ENCODE measurements at regions of chr16 and their contacts with region 1.

Region 1: GRCh38 chr16:30005341-30006094 is 5.3 kb downstream of the DOC2A start:
- DNase-seq: peak in 1 of 5 donors; percentile 46
- H3K4me3 ChIP-seq: no peak overlapping the region
- H3K27ac ChIP-seq: no peak overlapping the region
- H3K4me1 ChIP-seq: peaks cover 2% of the 10 kb centered on the region
- H3K27me3 ChIP-seq: no peaks in the 10 kb centered on the region
- CTCF ChIP-seq: peak; percentile 24 to 76 (median 65)
- EP300 ChIP-seq: no peak
- POLR2A ChIP-seq: no peak

Region 2: GRCh38 chr16:29805378-29806098 is 200.0 kb before region 1 on chr16:
- intact Hi-C with region 1: loop called in 3 of 4 experiments (anchors 5 to 10 kb)
- DNase-seq: peak; percentile 97 to 98 (median 98)
- H3K4me3 ChIP-seq: peak overlapping the region; percentile 68
- H3K27ac ChIP-seq: peak overlapping the region; percentile 99
- H3K4me1 ChIP-seq: peaks cover 14% of the 10 kb centered on the region
- H3K27me3 ChIP-seq: no peaks in the 10 kb centered on the region
- CTCF ChIP-seq: peak in 2 of 3 donors; percentile 30 to 47
- EP300 ChIP-seq: no peak
- POLR2A ChIP-seq: peak; percentile 94

Region 3: GRCh38 chr16:29815793-29816693 is 189.5 kb before region 1 on chr16 and contains the start of gene PAGR1:
- intact Hi-C with region 1: loop called in 1 of 4 experiments (anchors 5 kb)
- DNase-seq: peak; percentile 98 to 99 (median 99)
- H3K4me3 ChIP-seq: peak within 1 kb of the TSS; percentile 95
- H3K27ac ChIP-seq: peak within 1 kb of the TSS; percentile 89 to 98
- H3K4me1 ChIP-seq: peaks cover 24% of the 10 kb centered on the region
- H3K27me3 ChIP-seq: no peaks in the 10 kb centered on the region
- CTCF ChIP-seq: peak; percentile 86 to 93 (median 92)
- EP300 ChIP-seq: no peak
- POLR2A ChIP-seq: peak; percentile 78
- total RNA-seq, gene PAGR1: 41.3 to 83.6 (median 66.6) TPM

Region 4: DNA sequence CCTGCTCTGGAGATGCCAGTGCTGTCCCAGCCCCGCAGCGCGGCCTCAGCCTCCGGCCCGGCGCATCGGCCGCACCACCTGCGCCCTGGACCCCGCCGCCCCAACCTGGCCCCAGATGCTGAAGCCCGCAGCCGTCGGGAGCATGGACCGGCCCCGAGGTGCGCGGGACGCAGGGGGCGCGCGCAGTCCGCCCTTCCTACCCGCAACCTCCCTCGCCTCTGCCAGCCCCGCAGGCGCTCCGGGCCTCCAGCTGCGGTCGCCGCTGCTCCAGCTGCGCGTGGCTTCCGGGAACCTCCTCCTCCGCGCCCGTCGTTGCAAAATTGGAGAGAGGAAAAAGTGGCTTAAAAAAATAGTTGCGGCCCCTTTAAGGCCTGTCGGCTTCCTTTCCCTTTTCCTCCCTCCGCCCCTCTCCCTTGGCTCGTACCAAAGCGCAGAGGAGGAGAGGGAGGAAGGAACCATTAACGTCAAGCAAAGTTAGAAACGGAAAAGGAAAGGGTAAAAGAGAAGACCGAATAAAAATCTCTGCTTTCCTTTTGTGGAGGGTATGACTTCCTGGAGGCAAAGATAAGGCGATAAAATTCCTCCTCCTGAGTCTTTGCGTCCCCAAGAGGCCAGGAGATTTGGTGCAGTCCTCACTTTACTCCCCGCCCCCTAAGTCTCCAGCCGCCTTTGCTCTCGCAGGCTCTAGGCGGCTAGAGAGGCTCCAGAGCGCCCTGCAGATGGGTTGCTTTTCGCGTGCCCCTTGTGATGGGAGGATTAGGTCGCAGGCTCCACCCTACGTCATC is 142.4 kb before region 1 on chr16 and contains the start of gene CDIPT:
- intact Hi-C with region 1: loop called in 1 of 4 experiments (anchors 10 kb)
- DNase-seq: peak; percentile 90 to 93 (median 93)
- H3K4me3 ChIP-seq: peak within 1 kb of the TSS; percentile 77
- H3K27ac ChIP-seq: peak within 1 kb of the TSS; percentile 89 to 93
- H3K4me1 ChIP-seq: peaks cover 4% of the 10 kb centered on the region
- H3K27me3 ChIP-seq: no peaks in the 10 kb centered on the region
- CTCF ChIP-seq: peak; percentile 35 to 91 (median 84)
- EP300 ChIP-seq: no peak
- POLR2A ChIP-seq: no peak
- total RNA-seq, gene CDIPT: 88.2 to 121 (median 110) TPM

Region 5: GRCh38 chr16:29926005-29926710 is 79.4 kb before region 1 on chr16 and contains the start of gene KCTD13:
- intact Hi-C with region 1: loop called in 2 of 4 experiments (anchors 5 to 10 kb)
- DNase-seq: peak; percentile 86 to 96 (median 90)
- H3K4me3 ChIP-seq: peak within 1 kb of the TSS; percentile 73
- H3K27ac ChIP-seq: peak within 1 kb of the TSS; percentile 54 to 82
- H3K4me1 ChIP-seq: peaks cover 13% of the 10 kb centered on the region
- H3K27me3 ChIP-seq: no peaks in the 10 kb centered on the region
- CTCF ChIP-seq: no peak
- EP300 ChIP-seq: no peak
- POLR2A ChIP-seq: peak; percentile 89
- total RNA-seq, gene KCTD13: 18.4 to 36.8 (median 25.5) TPM

Region 6: GRCh38 chr16:30112197-30113030 is 106.9 kb after region 1 on chr16:
- intact Hi-C with region 1: no loop called
- DNase-seq: peak; percentile 46 to 72 (median 62)
- H3K4me3 ChIP-seq: no peak overlapping the region
- H3K27ac ChIP-seq: no peak overlapping the region
- H3K4me1 ChIP-seq: no peaks in the 10 kb centered on the region
- H3K27me3 ChIP-seq: no peaks in the 10 kb centered on the region
- CTCF ChIP-seq: peak in 1 of 3 donors; percentile 61
- EP300 ChIP-seq: no peak
- POLR2A ChIP-seq: no peak

Measured in ovary (tissue), 10 donors.